ENCODE measurements at regions of chr14 and their contacts with region 1.

Region 1: DNA sequence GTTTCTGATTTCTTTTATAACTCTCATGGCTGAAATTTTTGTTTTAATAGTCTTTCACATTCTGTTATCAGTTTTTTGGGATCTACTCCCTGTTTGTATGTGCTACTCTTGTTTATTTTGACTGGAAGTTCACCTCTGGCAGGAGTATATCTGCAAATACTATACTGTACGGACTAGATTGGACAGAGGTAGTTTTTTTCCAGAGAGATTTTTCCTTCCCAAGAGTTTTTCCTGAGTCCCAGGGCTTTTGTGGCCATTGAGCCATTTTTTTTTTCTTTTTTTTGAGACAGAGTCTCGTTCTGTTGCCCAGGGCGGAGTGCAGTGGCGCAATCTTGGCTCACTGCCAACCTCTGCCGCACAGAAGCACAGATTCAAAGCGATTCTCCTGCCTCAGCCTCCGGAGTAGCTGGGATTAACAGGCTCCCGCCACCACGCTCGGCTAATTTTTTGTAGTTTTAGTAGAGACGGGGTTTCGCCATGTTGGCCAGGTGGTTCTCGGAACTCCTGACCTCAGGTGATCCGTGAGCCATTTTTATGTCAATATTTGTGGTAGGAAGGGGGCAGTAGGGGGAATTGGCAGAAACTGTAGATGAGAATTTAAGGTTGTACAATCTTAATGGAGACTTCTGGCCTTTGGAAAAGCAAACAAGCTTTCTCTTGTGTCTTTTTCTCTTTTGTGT is 19.3 kb downstream of the KTN1 start:
- DNase-seq: peak; percentile 90
- H3K4me3 Mint-ChIP-seq: peak overlapping the region; percentile 68
- H3K27ac Mint-ChIP-seq: peak overlapping the region; percentile 93
- H3K4me1 Mint-ChIP-seq: peaks cover 17% of the 10 kb centered on the region
- H3K27me3 Mint-ChIP-seq: no peaks in the 10 kb centered on the region
- CTCF ChIP-seq: no peak

Region 2: DNA sequence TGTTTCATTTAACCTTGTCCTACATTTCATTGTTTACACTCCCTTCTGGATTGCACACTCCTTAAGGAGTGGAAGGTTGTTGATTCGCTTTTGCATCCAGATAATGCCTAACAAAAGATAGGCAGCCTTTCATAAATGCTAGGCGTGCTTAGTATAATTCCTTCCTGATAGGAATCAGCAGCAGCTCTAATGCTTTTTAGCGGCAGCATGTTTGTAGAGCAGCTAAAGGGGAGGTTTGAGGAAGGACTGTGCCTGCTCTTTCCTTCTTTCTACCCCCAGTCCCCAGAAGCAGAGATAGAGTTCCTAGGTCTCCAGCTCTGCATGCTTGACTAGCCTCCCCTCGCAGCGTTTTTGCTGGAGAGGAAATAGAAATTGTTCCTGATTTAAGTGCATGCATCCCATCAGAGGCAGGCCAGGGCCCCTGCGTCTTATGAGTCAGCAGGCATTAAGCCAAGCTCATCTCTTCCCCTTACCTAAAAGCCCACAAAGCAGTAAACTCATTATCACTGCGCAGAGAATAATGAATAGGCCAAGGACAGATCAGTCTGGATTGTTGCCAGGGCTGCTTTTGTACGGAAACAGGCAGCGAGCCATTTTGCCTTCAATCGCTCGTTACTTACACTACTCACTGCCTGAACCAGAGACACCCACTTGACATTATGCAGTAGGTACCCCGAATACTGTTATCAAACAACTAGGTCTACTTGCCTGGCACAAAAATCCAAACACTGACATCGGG is 144.9 kb before region 1 on chr14:
- CTCF ChIA-PET with region 1: interaction called, 3 read pairs
- POLR2A ChIA-PET with region 1: interaction called, 10 read pairs
- intact Hi-C with region 1: no loop called
- DNase-seq: peak; percentile 89
- H3K4me3 Mint-ChIP-seq: peak overlapping the region; percentile 21
- H3K27ac Mint-ChIP-seq: no peak overlapping the region
- H3K4me1 Mint-ChIP-seq: peaks cover 42% of the 10 kb centered on the region
- H3K27me3 Mint-ChIP-seq: no peaks in the 10 kb centered on the region
- CTCF ChIP-seq: no peak

Region 3: DNA sequence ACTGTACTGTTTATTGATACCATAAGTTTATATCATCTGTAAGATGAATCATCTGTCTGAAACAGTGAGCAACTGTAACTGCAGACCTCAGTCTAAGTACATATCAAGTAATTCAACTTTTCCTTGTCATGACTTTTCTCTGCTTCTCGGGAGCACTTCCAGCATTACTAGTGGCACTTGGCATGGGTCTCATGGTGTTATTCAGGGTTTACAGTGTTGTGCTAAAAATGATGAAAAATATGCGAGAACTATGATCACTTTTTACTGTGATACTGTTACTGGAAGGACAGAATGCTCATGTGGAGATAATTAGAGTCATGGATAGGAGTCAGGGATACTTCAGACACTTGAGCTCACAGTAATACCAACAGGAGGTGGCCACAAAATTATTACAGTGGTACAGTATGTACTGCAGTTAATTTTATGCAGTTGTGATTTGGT is 11.1 kb before region 1 on chr14:
- CTCF ChIA-PET with region 1: interaction called, 5 read pairs
- POLR2A ChIA-PET with region 1: interaction called, 88 read pairs
- intact Hi-C with region 1: no loop called
- DNase-seq: no peak
- H3K4me3 Mint-ChIP-seq: no peak overlapping the region
- H3K27ac Mint-ChIP-seq: peak overlapping the region; percentile 55
- H3K4me1 Mint-ChIP-seq: peaks cover 51% of the 10 kb centered on the region
- H3K27me3 Mint-ChIP-seq: no peaks in the 10 kb centered on the region
- CTCF ChIP-seq: no peak

Region 4: DNA sequence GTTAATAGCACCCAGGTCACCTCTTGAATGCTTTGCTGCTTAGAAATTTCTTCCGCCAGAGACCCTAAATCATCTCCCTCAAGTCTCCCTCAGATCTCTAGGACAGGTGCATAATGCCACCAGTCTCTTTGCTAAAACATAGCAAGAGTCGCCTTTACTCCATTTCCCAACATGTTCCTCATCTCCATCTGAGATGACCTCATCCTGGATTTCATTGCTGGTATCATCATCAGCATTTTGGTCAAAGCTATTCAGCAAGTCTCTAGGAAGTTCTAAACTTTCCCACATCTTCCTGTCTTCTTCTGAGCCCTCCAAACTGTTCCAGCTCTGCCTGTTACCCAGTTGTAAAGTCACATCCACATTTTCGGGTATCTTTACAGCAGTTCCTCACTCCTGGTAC is 21.6 kb after region 1 on chr14:
- CTCF ChIA-PET with region 1: no interaction called
- POLR2A ChIA-PET with region 1: no interaction called
- intact Hi-C with region 1: no loop called
- DNase-seq: no peak
- H3K4me3 Mint-ChIP-seq: no peak overlapping the region
- H3K27ac Mint-ChIP-seq: no peak overlapping the region
- H3K4me1 Mint-ChIP-seq: peaks cover 8% of the 10 kb centered on the region
- H3K27me3 Mint-ChIP-seq: no peaks in the 10 kb centered on the region
- CTCF ChIP-seq: no peak

Measured in MCF 10A (cell line).